WTC11 (cell line): ENCODE measurements at regions of chr22 and their contacts with region 1.

Region 1: DNA sequence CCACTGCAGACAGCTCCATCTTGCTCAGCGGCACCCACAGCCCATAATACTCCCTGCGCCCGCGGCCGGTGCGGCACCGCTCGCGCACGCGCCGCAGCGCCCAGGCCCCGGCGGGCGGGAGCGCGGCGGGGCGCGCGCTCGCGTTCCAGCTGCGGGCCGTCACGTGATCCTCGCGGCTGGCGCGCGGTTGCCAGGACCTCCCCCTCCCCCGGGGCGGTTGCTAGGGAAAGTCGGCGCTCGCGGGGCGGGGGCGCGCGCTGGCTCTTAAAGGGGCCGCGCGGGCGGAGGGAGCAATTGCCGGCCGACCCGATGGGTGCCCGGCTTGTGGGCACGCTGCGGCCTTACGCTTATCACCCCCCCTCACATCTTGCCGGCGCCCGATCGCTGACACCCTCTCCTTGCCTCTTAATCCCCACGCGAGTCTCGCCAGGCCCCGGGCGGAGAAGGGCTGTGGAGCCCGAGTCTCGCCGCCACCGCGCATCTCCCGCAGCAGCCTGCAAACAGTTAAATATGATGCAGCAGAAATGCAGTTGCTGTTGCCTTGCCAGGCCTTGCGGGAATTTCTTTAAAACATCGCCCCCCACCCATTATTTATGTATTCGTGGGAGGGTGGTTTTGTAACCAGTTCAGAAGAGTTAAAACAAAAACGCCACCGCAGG is at the start of gene CBX6:
- DNase-seq: peak; percentile 96
- ATAC-seq: peak; percentile 49
- H3K4me3 Mint-ChIP-seq: peak within 1 kb of the TSS; percentile 93
- H3K27ac Mint-ChIP-seq: peak within 1 kb of the TSS; percentile 96
- H3K4me1 Mint-ChIP-seq: peaks cover 46% of the 10 kb centered on the region
- H3K27me3 Mint-ChIP-seq: peaks cover 7% of the 10 kb centered on the region
- CTCF ChIP-seq: no peak
- total RNA-seq, gene CBX6: 21.5 to 27.0 TPM (median 23.8 TPM) in 3 replicates

Region 2: DNA sequence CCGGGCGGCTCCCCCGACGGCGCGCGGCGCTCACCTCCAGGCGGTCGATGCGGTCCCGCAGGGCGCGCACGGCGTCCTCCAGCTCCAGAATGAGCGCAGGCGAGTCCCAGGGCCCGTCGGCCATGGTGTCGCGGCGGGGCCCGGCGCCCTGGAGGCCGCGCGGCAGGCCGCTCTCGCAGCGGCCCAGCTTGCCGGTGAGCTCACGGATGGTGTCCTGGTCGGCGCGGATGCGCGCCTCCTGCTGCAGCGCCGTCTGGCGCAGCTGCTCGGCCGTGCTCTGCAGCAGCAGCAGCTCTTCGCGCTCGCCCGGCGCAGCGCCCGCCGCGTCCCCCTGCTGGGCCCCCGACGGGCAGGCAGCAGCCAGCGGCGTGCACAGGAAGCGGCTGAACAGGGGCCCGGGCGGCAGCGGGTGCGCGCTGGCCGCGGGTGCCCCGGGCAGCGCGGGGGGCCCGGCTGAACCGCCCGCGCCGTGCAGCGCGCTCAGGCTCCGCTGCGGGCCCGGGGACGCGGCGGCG is 29.0 kb before region 1 on chr22:
- CTCF ChIA-PET with region 1: interaction called, 12 read pairs
- POLR2A ChIA-PET with region 1: interaction called, 3 read pairs
- DNase-seq: peak; percentile 60
- ATAC-seq: peak; percentile 63
- H3K4me3 Mint-ChIP-seq: no peak overlapping the region
- H3K27ac Mint-ChIP-seq: no peak overlapping the region
- H3K4me1 Mint-ChIP-seq: peaks cover 21% of the 10 kb centered on the region
- H3K27me3 Mint-ChIP-seq: peaks cover 69% of the 10 kb centered on the region
- CTCF ChIP-seq: no peak

Region 3: GRCh38 chr22:38890377-38890776 is 18.1 kb after region 1 on chr22:
- CTCF ChIA-PET with region 1: no interaction called
- POLR2A ChIA-PET with region 1: no interaction called
- DNase-seq: no peak
- ATAC-seq: no peak
- H3K4me3 Mint-ChIP-seq: no peak overlapping the region
- H3K27ac Mint-ChIP-seq: no peak overlapping the region
- H3K4me1 Mint-ChIP-seq: no peaks in the 10 kb centered on the region
- H3K27me3 Mint-ChIP-seq: peaks cover 4% of the 10 kb centered on the region
- CTCF ChIP-seq: no peak

Region 4: DNA sequence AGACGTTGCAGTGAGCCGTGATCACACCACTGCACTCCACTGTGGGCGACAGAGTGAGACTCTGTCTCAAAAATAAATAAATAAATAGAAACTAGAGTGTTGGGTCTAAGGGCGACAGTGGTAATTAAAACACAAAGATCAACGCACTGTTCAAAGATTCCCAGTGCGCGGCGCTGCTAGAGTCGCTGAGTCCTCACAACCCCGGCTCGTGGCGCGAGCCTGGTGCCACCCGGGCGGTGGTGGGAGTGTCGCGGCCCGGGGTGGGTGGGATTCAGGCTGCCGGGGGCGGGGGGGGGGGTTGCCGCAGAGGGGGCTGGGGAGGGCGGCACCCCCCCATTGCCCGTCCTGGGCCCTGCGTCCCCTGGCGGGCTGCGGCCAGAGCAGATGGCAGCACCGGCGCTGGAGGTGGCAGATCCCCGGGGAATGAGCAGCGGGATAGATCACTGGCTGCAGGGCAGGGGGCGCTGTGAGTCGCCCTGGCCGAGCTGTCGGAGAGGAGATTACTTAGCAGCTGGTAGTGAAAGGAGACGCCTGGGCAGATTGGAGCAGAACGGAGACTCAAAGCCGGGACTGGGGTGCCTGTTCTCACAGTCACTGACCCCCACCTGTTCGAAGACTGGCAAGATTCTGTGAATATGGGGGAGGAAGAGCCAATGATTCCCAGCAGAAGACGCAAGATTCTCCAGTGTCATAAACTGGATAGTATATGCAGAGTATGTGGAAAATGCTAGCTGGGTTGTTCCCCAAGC is 54.9 kb after region 1 on chr22:
- CTCF ChIA-PET with region 1: interaction called, 26 read pairs
- POLR2A ChIA-PET with region 1: no interaction called
- DNase-seq: peak; percentile 85
- ATAC-seq: peak; percentile 94
- H3K4me3 Mint-ChIP-seq: peak overlapping the region; percentile 45
- H3K27ac Mint-ChIP-seq: no peak overlapping the region
- H3K4me1 Mint-ChIP-seq: peaks cover 9% of the 10 kb centered on the region
- H3K27me3 Mint-ChIP-seq: no peaks in the 10 kb centered on the region; the same call in 1 of the 2 replicates
- CTCF ChIP-seq: peak; percentile 59

Region 5: DNA sequence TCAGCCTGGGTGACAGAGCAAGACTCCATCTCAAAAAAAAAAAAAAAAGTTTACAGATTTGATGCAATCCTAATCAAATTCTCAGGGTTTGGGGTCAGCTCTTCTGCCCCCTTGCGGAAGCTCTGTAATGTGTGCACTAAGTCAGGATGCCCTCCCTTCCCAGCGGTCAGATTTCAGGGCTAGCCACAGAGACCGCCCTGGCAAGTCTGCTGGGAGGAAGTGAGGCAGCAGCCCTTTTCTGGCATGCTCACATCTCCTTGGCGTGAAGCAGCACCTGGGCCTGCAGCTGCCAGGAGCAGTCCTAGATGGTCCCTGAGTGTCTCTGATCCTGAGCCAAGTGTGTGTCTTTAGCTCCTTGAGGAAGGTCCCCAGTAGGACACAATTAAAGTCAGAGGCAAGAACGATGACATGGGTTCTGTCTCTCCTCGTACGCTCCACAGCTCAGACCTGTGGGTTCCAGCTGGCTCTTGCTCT is 130.9 kb after region 1 on chr22:
- CTCF ChIA-PET with region 1: interaction called, 36 read pairs
- POLR2A ChIA-PET with region 1: interaction called, 3 read pairs
- DNase-seq: peak; percentile 79
- ATAC-seq: peak; percentile 99
- H3K4me3 Mint-ChIP-seq: no peak overlapping the region
- H3K27ac Mint-ChIP-seq: peak overlapping the region; percentile 71
- H3K4me1 Mint-ChIP-seq: peaks cover 10% of the 10 kb centered on the region
- H3K27me3 Mint-ChIP-seq: no peaks in the 10 kb centered on the region; the same call in 1 of the 2 replicates
- CTCF ChIP-seq: peak; percentile 73

Region 6: GRCh38 chr22:39152511-39153219 is 280.4 kb after region 1 on chr22 and contains the start of gene CBX7:
- CTCF ChIA-PET with region 1: interaction called, 18 read pairs
- POLR2A ChIA-PET with region 1: interaction called, 3 read pairs
- DNase-seq: peak; percentile 87
- ATAC-seq: peak; percentile 68
- H3K4me3 Mint-ChIP-seq: peak within 1 kb of the TSS; percentile 71
- H3K27ac Mint-ChIP-seq: no peak within 1 kb of the TSS
- H3K4me1 Mint-ChIP-seq: peaks cover 26% of the 10 kb centered on the region
- H3K27me3 Mint-ChIP-seq: peaks cover 42% of the 10 kb centered on the region
- CTCF ChIP-seq: no peak
- total RNA-seq, gene CBX7: 10.6 to 11.1 TPM (median 10.6 TPM) in 3 replicates